Activated B cell treated with CpG ODN at 0.5 μM for 24 hours (primary cell): ENCODE measurements at regions of chr11 and their contacts with region 1.

Region 1: GRCh38 chr11:124673333-124674167 is at the starts of genes SIAE and SPA17:
- DNase-seq: peak; percentile 82
- ATAC-seq: peak; percentile 91
- H3K4me3 Mint-ChIP-seq: peak within 1 kb of the TSS; percentile 92
- H3K27ac Mint-ChIP-seq: peak within 1 kb of the TSS; percentile 95
- H3K4me1 Mint-ChIP-seq: peaks cover 27% of the 10 kb centered on the region
- H3K27me3 Mint-ChIP-seq: no peaks in the 10 kb centered on the region
- CTCF ChIP-seq: no peak
- total RNA-seq, gene SIAE: 2.6 and 3.4 TPM in 2 replicates
- total RNA-seq, gene SPA17: 1.2 and 1.6 TPM in 2 replicates

Region 2: GRCh38 chr11:124724979-124725718 is 51.6 kb after region 1 on chr11:
- CTCF ChIA-PET with region 1: interaction called, 3 read pairs
- POLR2A ChIA-PET with region 1: interaction called, 8 read pairs
- intact Hi-C with region 1: loop called (anchors 1 kb)
- DNase-seq: peak; percentile 47
- ATAC-seq: peak; percentile 87
- H3K4me3 Mint-ChIP-seq: peak overlapping the region; percentile 73
- H3K27ac Mint-ChIP-seq: peak overlapping the region; percentile 50
- H3K4me1 Mint-ChIP-seq: peaks cover 56% of the 10 kb centered on the region
- H3K27me3 Mint-ChIP-seq: peaks cover 10% of the 10 kb centered on the region
- CTCF ChIP-seq: no peak

Region 3: GRCh38 chr11:124758317-124759203 is 85.0 kb after region 1 on chr11:
- CTCF ChIA-PET with region 1: interaction called, 162 read pairs
- POLR2A ChIA-PET with region 1: interaction called, 17 read pairs
- intact Hi-C with region 1: loop called (anchors 1 kb)
- DNase-seq: peak; percentile 72
- ATAC-seq: peak; percentile 67
- H3K4me3 Mint-ChIP-seq: peak overlapping the region; percentile 79
- H3K27ac Mint-ChIP-seq: peak overlapping the region; percentile 60
- H3K4me1 Mint-ChIP-seq: peaks cover 46% of the 10 kb centered on the region
- H3K27me3 Mint-ChIP-seq: peaks cover 2% of the 10 kb centered on the region
- CTCF ChIP-seq: no peak

Region 4: DNA sequence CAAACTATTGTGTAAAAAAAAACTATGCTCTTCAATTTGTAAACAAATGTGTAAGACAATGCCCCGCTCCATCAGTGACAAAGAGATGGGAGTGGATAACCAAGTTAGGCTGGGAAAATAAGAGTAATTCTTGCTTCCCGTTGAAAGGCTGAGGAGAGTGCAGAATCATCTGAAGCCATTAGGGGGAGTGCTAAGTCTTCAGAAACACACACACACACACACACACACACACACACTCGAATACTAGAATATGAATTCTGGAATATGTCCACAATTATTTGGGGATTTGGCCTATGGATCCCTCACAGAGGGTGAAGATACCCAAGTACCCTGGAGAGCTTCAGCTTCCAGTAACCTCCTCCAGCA is 163.9 kb after region 1 on chr11:
- CTCF ChIA-PET with region 1: interaction called, 84 read pairs
- POLR2A ChIA-PET with region 1: interaction called, 4 read pairs
- intact Hi-C with region 1: loop called (anchors 1 kb)
- DNase-seq: no peak
- ATAC-seq: no peak
- H3K4me3 Mint-ChIP-seq: no peak overlapping the region
- H3K27ac Mint-ChIP-seq: no peak overlapping the region
- H3K4me1 Mint-ChIP-seq: peaks cover 16% of the 10 kb centered on the region
- H3K27me3 Mint-ChIP-seq: peaks cover 47% of the 10 kb centered on the region
- CTCF ChIP-seq: no peak

Region 5: DNA sequence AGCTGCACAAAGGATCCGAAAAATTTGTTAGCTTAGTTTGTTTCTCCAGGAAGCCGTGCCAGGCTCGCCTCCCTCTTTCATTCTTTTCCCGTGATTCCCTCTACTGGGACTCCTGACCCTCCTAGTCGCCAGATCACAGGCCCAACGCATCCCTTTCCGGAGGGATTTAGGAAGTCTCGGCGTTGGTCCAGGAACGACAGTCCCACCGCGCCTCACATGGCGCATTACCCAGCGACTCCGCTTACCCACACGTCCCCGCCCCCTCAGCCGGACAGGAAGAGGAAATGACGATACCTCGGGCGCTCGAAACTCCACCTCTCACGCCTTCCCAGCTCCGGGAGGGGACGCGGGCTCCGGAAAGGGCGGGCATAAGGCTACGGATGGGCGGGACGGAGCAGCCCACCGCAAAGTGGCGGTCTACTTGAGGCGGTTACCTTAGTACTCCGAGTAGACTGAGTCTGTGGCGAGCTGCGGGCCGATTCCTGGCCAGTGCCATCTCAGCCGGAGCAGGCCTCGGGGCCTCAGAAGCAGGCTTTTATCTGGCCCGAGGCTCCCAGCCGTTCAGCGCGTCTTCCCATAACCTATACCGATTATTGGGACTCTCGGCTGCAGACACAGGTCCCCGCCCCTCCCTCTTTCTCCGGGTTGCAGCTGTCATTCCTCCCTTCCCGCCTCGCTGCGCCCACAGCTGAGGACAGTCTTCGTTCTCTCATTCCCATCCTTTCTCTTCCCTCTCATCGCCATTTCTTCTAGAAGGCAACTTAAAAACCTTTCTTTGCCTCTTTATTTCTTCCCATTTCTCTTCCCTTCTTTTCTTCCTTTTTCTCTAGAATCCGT is 280.4 kb after region 1 on chr11 and contains the start of gene CCDC15:
- CTCF ChIA-PET with region 1: no interaction called
- POLR2A ChIA-PET with region 1: interaction called, 3 read pairs
- intact Hi-C with region 1: loop called (anchors 1 kb)
- DNase-seq: peak; percentile 88
- ATAC-seq: peak; percentile 100
- H3K4me3 Mint-ChIP-seq: no peak within 1 kb of the TSS
- H3K27ac Mint-ChIP-seq: no peak within 1 kb of the TSS
- H3K4me1 Mint-ChIP-seq: no peaks in the 10 kb centered on the region
- H3K27me3 Mint-ChIP-seq: peaks cover 4% of the 10 kb centered on the region
- CTCF ChIP-seq: no peak
- total RNA-seq, gene CCDC15: 0.51 and 0.71 TPM in 2 replicates

Region 6: DNA sequence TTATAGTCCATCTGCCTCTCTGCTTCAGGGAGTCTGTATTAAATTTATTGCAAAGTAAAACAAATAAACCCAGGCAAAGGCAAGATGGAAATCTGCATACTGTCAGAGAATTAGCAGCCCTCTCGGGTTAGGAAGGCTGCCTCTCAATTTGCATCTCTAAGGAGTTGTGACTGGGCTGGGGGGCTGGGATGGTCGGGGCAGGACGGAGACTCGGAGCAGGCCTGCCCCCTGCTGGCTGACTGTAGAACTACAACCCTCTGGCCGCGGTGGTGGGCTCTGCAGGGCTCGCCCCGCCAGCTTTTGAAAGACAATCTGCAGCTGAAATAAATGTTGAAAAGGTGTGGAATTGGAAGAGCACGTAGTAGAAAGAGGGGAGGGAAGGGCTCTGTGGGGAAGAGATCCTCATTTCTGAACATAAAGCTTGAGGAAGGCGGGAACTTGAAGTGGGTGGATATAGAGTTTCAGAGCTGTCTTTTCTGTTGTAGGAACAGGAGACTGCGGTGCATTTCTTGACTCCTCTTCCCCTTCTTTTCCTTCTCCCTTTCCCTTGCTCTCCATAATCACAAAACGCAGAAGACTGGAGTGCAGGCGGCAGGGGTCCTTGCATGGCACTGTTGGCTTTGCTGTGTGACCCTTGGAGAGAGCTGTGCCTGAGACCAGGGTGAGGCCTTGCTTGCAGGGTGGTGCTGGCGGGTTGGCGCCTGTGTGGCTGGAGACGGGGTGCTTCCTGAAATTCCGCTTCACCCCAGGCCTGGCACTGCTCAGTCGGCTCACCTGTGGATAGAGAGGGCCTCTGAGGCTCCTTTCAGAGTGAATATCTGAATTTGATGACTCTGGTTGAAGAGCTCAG is 468.4 kb after region 1 on chr11:
- CTCF ChIA-PET with region 1: no interaction called
- POLR2A ChIA-PET with region 1: no interaction called
- intact Hi-C with region 1: loop called (anchors 5 kb)
- DNase-seq: peak; percentile 65
- ATAC-seq: peak; percentile 98
- H3K4me3 Mint-ChIP-seq: no peak overlapping the region
- H3K27ac Mint-ChIP-seq: no peak overlapping the region
- H3K4me1 Mint-ChIP-seq: peaks cover 2% of the 10 kb centered on the region
- H3K27me3 Mint-ChIP-seq: peaks cover 38% of the 10 kb centered on the region
- CTCF ChIP-seq: peak; percentile 48